ENCODE measurements at regions of chr12 and their contacts with region 1.

Region 1: DNA sequence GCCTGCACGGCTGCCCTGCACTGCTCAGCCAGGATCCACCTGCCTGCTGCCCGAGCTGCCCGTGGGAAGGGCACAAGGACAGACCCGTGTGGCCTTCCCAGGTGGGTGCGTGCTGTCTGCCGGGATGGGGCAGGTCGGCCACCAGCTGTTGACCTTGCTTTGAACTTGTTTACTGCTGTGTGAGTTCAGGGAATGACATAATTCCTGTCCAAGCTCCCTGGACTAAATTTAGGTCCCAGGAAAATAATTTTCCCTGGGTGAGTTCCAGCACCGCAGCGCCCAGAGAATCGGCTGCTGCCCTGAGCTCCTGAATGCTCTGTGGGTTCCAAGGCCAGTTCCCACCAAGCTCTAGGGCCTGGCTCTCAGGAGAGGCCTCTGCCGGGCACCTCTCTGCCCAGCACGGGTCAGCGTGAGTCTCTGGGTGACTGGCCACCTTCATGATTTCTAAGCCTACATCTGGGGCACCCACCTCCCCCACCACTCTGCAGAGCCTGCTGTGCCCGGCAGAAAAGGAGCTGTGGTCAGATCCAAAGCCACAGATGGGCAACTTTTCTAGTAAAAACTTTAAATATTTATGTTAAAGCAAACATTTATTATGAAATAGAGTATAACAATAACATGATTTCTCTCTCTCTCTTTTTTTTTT is 27.2 kb upstream of the MLXIP start:
- DNase-seq: no peak
- H3K4me3 Mint-ChIP-seq: no peak overlapping the region
- H3K27ac Mint-ChIP-seq: no peak overlapping the region
- H3K4me1 Mint-ChIP-seq: peaks cover 3% of the 10 kb centered on the region
- H3K27me3 Mint-ChIP-seq: no peaks in the 10 kb centered on the region

Region 2: GRCh38 chr12:121917979-121918678 is 133.2 kb before region 1 on chr12 and contains the start of gene CFAP251:
- CTCF ChIA-PET with region 1: no interaction called
- intact Hi-C with region 1: loop called (anchors 5 kb)
- DNase-seq: peak; percentile 98
- H3K4me3 Mint-ChIP-seq: peak within 1 kb of the TSS; percentile 69
- H3K27ac Mint-ChIP-seq: peak within 1 kb of the TSS; percentile 78
- H3K4me1 Mint-ChIP-seq: peaks cover 16% of the 10 kb centered on the region
- H3K27me3 Mint-ChIP-seq: no peaks in the 10 kb centered on the region
- total RNA-seq, gene CFAP251: 0.20 to 0.62 TPM

Region 3: DNA sequence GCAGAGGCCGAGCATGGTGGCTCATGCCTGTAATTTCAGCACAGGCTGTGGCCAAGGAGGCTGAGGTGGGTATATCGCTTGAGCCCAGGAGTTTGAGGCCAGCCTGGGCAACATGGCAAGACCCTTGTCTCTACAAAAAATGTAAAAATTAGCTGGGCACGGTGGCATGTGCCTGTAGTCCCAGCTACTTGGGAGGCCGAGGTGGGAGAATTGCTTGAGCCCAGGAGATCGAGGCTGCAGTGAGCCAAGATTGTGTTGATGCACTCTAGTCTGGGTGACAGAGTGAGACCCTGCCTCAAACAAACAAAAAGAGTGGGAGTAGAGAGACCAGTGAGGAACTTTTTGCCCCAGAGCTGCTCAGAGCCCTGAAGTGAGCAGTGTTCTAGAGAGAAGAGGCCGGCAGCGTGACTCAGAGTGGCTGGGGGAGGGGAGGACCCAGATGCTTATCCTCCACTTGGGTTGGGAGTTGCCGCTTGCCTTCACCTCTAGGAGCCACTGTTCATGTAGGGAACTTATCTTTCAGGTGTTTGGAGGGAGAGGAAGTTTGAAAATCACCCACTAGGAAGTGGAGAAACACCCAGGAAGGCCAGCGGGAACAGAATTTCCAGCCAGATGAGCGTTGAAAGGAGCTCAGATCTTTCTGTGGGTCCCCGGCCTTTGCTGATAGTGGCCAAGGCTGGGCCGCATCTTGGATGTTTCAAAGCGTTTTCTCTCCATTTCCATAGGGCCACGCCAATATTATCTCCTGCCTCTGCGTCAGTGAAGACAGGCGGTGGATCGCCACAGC is 117.6 kb before region 1 on chr12:
- CTCF ChIA-PET with region 1: no interaction called
- intact Hi-C with region 1: no loop called
- DNase-seq: no peak
- H3K4me3 Mint-ChIP-seq: no peak overlapping the region
- H3K27ac Mint-ChIP-seq: no peak overlapping the region
- H3K4me1 Mint-ChIP-seq: peaks cover 5% of the 10 kb centered on the region
- H3K27me3 Mint-ChIP-seq: no peaks in the 10 kb centered on the region

Region 4: DNA sequence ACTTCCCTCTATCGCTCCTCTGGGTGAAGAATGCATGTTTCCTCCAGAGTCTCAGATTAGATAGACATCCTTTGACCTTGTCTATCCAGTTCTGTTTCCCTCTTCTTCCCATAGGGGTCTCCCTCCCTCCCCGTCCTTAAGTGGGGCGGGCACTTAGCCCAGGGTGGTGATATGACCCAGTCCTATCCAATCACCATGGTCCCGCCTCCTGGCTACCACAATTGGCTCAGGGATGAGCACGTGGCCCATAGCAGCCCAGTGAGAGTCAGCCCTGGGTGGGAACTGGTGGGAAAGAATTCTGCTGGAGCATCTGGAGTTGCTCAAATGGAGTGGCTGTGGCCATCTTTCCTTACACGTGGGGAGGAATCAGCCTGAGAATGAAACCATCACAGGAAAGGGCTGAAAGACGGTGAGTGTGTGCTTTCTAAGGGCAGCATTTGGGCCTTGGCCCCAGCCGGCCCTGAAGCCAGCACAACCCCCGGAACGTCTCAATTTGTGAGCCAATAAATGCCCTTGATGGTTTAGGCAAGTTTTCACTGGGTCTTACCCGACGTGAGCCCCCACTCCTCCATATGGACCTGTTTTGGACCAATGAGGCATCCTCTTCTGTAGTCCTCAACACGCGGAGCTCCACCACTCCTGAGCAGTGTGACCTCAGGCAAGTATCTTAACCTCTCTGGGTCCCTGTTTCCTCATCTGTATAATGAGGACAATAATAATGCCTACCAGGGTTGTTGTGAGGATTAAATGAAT is 12.8 kb after region 1 on chr12:
- CTCF ChIA-PET with region 1: interaction called, 13 read pairs
- intact Hi-C with region 1: no loop called
- DNase-seq: peak; percentile 61
- H3K4me3 Mint-ChIP-seq: peak overlapping the region; percentile 14
- H3K27ac Mint-ChIP-seq: no peak overlapping the region
- H3K4me1 Mint-ChIP-seq: peaks cover 19% of the 10 kb centered on the region
- H3K27me3 Mint-ChIP-seq: no peaks in the 10 kb centered on the region

Region 5: DNA sequence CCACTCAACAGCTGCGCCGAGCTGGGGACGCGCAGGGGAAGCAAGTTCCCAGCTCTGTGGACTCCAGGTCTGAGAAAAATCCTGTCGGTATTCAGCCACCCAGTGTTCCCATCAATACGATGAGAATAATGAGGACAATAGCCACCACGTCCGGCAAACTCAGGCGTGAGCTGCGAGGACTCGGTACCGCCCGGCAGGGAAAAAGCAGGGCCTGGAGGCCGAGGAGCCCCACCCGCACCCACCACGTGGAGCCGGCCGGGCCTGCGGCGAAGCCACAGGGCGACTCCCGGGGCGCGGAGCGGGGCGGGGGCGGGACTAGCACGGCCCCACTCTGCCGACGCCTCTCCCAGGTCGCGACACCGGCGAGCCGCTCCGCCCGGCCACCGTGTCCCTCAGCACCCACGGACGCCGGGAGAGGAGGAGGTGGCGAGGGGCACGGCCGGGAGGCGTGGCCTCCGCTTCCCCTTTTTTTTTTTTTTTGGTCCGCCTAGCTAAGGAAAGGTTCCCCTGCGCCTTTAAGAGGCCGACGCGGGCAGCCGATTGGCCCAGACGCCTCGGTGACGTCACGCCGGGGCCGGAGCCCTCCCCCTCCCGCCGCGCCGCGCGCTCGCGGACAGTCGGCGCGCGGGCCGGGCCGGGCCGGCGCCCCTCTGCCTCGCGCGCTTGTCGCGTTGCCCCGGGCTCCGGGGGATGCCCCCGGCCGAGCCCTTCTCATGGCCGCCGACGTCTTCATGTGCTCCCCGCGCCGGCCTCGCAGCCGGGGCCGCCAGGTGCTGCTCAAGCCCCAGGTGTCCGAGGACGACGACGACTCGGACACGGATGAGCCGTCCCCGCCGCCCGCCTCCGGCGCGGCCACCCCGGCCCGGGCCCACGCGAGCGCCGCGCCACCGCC is 27.0 kb after region 1 on chr12 and contains the start of gene MLXIP:
- CTCF ChIA-PET with region 1: interaction called, 8 read pairs
- intact Hi-C with region 1: loop called (anchors 2 kb)
- DNase-seq: peak; percentile 91
- H3K4me3 Mint-ChIP-seq: peak within 1 kb of the TSS; percentile 85
- H3K27ac Mint-ChIP-seq: peak within 1 kb of the TSS; percentile 51
- H3K4me1 Mint-ChIP-seq: peaks cover 47% of the 10 kb centered on the region
- H3K27me3 Mint-ChIP-seq: no peaks in the 10 kb centered on the region
- total RNA-seq, gene MLXIP: 18.8 to 22.0 TPM

Region 6: DNA sequence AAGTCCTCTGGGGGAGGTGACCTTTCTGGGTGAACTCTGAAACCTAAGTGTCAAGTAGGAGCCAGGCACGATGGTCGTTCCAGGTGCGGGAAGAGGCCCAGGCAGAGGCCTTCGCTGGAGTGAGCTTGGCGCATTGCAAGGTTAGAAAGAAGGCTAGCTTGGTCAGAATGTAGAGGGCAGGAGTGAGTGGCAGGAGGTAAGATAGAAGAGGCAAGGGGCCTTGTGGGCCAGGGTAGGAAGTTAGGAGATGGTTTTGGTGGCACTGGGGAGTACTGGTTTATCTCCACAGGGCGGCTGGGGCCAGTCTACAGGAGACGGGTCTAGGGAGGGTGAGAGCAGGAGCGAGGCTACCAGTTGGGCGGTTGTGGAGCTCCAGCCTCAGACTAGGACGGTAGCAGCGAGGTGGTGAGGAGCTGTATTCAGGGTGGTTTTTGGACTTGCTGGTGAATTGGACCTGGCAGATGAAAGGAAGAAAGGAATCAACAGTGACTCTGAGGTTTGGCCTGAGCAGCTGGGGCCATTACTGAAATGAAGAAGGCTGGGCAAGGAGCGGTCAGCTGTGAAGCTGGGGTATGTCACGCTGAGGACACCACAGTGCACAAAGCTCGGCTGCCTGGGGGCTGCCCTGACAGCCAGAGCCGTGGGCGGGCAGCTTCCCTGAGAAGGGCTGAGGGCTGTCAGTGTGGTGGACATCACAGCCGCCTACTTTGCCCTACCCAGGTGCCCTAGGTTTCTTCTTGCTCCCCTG is 36.3 kb after region 1 on chr12:
- CTCF ChIA-PET with region 1: interaction called, 11 read pairs
- intact Hi-C with region 1: no loop called
- DNase-seq: no peak
- H3K4me3 Mint-ChIP-seq: no peak overlapping the region
- H3K27ac Mint-ChIP-seq: no peak overlapping the region
- H3K4me1 Mint-ChIP-seq: peaks cover 89% of the 10 kb centered on the region
- H3K27me3 Mint-ChIP-seq: no peaks in the 10 kb centered on the region

Region 7: GRCh38 chr12:122190842-122191668 is 139.7 kb after region 1 on chr12:
- CTCF ChIA-PET with region 1: interaction called, 6 read pairs
- intact Hi-C with region 1: loop called (anchors 1 kb)
- DNase-seq: peak; percentile 82
- H3K4me3 Mint-ChIP-seq: no peak overlapping the region
- H3K27ac Mint-ChIP-seq: no peak overlapping the region
- H3K4me1 Mint-ChIP-seq: no peaks in the 10 kb centered on the region
- H3K27me3 Mint-ChIP-seq: peaks cover 3% of the 10 kb centered on the region

Region 8: GRCh38 chr12:122265931-122266771 is 214.8 kb after region 1 on chr12 and contains the start of gene VPS33A:
- CTCF ChIA-PET with region 1: no interaction called
- intact Hi-C with region 1: loop called (anchors 5 kb)
- DNase-seq: peak; percentile 95
- H3K4me3 Mint-ChIP-seq: peak within 1 kb of the TSS; percentile 94
- H3K27ac Mint-ChIP-seq: peak within 1 kb of the TSS; percentile 96
- H3K4me1 Mint-ChIP-seq: peaks cover 23% of the 10 kb centered on the region
- H3K27me3 Mint-ChIP-seq: peaks cover 3% of the 10 kb centered on the region
- total RNA-seq, gene VPS33A: 15.9 to 17.2 TPM

Region 9: DNA sequence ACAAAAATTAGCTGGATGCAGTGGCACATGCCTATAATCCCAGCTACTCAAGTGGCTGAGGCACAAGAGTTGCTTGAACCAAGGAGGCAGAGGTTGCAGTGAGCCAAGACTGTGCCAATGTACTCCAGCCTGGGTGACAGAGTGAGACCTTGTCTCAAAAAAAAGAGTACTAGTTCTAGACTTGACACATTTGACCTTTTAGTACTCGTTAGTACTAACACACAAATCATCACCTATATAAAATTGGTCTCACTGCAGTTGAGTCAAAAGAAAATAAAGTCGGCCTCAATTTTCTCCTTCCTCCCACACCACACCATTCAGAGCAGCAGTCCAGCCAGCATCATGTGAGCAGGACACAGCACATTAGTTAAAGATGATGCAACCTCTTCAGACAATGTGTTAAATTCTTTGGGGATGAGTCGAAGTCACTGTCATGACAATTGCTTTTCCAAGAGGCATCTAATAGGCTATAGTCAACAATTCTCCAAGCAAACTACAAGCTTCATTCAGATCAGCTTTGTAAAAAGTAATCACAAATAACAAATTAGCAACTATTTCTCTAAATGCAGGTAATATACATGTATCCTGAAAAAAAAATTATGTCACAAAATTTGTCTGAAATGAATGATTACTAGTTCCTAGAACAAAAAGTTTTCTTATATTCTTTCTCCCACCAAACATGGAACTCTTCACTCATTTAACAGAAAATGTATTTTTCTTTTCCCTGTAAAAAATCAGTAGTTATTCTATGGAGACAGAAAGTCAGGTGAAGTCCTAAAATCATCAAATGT is 315.5 kb after region 1 on chr12:
- CTCF ChIA-PET with region 1: no interaction called
- intact Hi-C with region 1: no loop called
- DNase-seq: peak; percentile 16
- H3K4me3 Mint-ChIP-seq: no peak overlapping the region
- H3K27ac Mint-ChIP-seq: peak overlapping the region; percentile 82
- H3K4me1 Mint-ChIP-seq: peaks cover 21% of the 10 kb centered on the region
- H3K27me3 Mint-ChIP-seq: no peaks in the 10 kb centered on the region

Measured in activated naive CD4-positive, alpha-beta T cell treated with anti-CD3 and anti-CD28 coated beads for 36 hours (primary cell).